Prostate gland (tissue), 2 donors: ENCODE measurements at regions of chr21 and their contacts with region 1.

Region 1: GRCh38 chr21:38805328-38806152 is at the start of gene ETS2:
- DNase-seq: peak; percentile 88
- H3K4me3 ChIP-seq: peak within 1 kb of the TSS; percentile 83 to 86
- H3K27ac ChIP-seq: peak within 1 kb of the TSS; percentile 89 to 91
- H3K4me1 ChIP-seq: no peaks in the 10 kb centered on the region
- H3K27me3 ChIP-seq: no peaks in the 10 kb centered on the region
- CTCF ChIP-seq: no peak
- POLR2A ChIP-seq: peak; percentile 87
- total RNA-seq, gene ETS2: 53.3 to 80.2 TPM

Region 2: DNA sequence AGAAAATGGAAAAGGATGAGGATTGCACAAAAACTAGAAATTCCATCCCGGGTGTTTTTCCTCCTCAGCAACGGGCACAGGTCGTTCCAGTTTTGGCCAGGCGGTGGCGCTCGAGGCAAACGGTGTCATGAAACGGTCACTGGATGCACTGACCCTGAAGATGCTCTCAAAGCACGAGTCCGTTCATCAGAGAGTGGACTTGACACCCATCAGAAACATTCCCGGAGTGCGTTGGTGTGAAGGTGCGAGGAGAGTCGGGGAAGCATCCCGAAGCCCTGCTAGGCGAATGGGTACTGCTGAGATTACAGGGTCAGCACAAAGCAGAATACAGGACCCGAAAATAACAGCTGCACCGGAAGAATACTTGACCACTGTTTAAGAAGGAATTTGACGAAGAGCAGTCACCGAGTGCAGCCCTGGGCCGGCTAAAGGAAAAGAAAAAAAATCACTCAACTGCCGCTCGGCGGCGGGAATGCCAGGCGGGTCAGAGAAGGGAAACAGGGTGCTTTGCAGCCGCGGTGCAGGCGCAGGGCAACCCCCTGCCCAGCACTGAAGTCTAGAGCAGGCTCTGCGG is 71.5 kb before region 1 on chr21:
- intact Hi-C with region 1: loop called (anchors 5 kb)
- DNase-seq: peak; percentile 81
- H3K4me3 ChIP-seq: no peak overlapping the region
- H3K27ac ChIP-seq: peak overlapping the region; percentile 25 to 28
- H3K4me1 ChIP-seq: no peaks in the 10 kb centered on the region
- H3K27me3 ChIP-seq: no peaks in the 10 kb centered on the region
- CTCF ChIP-seq: peak; percentile 67 to 93 (median 90)
- POLR2A ChIP-seq: no peak

Region 3: GRCh38 chr21:38755681-38756371 is 49.7 kb before region 1 on chr21:
- intact Hi-C with region 1: loop called (anchors 5 kb)
- DNase-seq: no peak
- H3K4me3 ChIP-seq: no peak overlapping the region
- H3K27ac ChIP-seq: peak overlapping the region in 1 of 2 donors; percentile 36
- H3K4me1 ChIP-seq: no peaks in the 10 kb centered on the region
- H3K27me3 ChIP-seq: no peaks in the 10 kb centered on the region
- CTCF ChIP-seq: no peak
- POLR2A ChIP-seq: no peak

Region 4: GRCh38 chr21:38897532-38898422 is 92.2 kb after region 1 on chr21:
- intact Hi-C with region 1: loop called (anchors 5 kb)
- DNase-seq: peak; percentile 38
- H3K4me3 ChIP-seq: no peak overlapping the region
- H3K27ac ChIP-seq: peak overlapping the region; percentile 11 to 55
- H3K4me1 ChIP-seq: no peaks in the 10 kb centered on the region
- H3K27me3 ChIP-seq: no peaks in the 10 kb centered on the region
- CTCF ChIP-seq: no peak
- POLR2A ChIP-seq: no peak

Region 5: DNA sequence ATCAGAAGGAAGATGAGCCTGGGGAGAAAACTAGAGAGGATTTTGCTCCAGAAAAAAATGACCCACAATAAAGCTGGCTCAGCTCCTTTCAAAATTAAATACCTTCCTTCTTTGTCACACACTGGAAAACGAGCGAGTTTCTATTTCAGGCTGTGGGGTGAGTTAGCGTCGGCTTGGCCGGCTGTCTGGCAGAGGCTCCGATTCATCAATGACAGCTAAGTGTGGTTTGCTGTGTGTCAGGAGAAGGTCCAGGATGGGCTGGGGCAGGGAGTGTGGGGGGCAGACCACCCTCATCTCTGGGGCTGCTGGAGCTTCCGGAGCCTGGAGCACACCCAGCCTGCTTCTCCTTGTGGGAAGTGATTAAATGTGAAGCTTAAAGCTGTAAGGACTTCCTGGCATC is 120.4 kb after region 1 on chr21:
- intact Hi-C with region 1: loop called (anchors 5 kb)
- DNase-seq: peak; percentile 63
- H3K4me3 ChIP-seq: no peak overlapping the region
- H3K27ac ChIP-seq: peak overlapping the region; percentile 51 to 69
- H3K4me1 ChIP-seq: no peaks in the 10 kb centered on the region
- H3K27me3 ChIP-seq: no peaks in the 10 kb centered on the region
- CTCF ChIP-seq: no peak
- POLR2A ChIP-seq: peak; percentile 32

Region 6: DNA sequence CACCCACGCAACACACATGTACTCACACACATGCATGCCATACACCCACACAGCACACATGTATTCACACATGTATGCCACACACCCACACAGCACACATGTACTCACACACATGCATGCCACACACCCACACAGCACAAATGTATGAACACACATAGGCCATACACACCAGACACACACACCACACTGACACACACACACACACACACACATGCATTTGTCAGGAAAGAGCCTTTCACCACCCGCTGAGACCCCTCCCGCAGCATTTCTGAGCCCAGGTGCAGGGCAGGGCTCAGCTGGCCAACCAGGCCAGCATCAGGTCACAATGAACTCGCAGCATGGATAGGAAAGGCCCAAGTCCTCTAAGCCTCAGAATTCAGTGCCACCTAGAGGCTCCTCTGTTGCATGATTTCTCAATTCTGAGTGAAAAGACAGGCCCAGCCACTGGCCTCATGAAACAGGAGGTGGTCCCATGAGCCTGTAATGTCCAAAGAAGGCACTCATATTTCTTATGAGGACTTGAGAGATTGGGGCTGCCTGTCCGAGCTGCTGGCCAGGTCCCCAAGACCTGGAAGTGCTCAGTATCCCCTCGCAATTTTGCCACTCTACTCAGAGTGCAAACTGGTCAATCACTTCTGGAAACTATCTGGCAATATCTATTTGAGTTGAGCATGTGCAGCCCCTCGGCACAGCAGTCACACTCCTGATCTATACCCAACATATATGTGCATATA is 320.4 kb after region 1 on chr21:
- intact Hi-C with region 1: loop called (anchors 2 kb)
- DNase-seq: peak; percentile 62
- H3K4me3 ChIP-seq: no peak overlapping the region
- H3K27ac ChIP-seq: no peak overlapping the region
- H3K4me1 ChIP-seq: no peaks in the 10 kb centered on the region
- H3K27me3 ChIP-seq: no peaks in the 10 kb centered on the region
- CTCF ChIP-seq: peak; percentile 29 to 80 (median 64)
- POLR2A ChIP-seq: no peak